ENCODE measurements at regions of chr7 and their contacts with region 1.

Region 1: DNA sequence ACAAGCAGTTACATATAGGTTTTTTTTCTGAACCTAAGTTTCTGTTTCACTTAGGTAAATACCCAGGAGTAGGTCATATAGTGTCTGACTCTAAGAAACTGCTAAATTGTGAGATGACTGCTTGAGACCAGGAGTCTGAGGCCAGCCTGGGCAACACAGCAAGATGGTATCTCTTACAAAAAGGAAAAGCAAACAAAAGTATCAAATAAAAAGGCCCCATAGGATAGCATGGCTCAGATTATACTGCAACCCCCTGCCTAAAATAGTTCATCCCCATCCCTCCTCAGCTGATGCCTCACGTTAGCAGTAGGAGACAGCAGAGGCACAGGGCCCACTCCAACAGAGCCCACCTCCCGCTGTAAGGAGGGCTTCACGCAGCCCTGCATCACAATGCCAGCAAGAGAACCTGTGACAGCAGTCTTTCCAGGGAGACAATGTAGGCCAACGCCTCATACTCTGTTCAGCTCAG is 90.2 kb downstream of the SRPK2 start:
- DNase-seq: peak; percentile 33
- ATAC-seq: peak; percentile 77
- H3K4me3 Mint-ChIP-seq: peak overlapping the region; percentile 53
- H3K27ac Mint-ChIP-seq: peak overlapping the region; percentile 76
- H3K4me1 Mint-ChIP-seq: peaks cover 55% of the 10 kb centered on the region
- H3K27me3 Mint-ChIP-seq: no peaks in the 10 kb centered on the region

Region 2: GRCh38 chr7:104679085-104679484 is 619.4 kb before region 1 on chr7:
- CTCF ChIA-PET with region 1: no interaction called
- POLR2A ChIA-PET with region 1: no interaction called
- DNase-seq: no peak
- ATAC-seq: no peak
- H3K4me3 Mint-ChIP-seq: no peak overlapping the region
- H3K27ac Mint-ChIP-seq: no peak overlapping the region
- H3K4me1 Mint-ChIP-seq: no peaks in the 10 kb centered on the region
- H3K27me3 Mint-ChIP-seq: no peaks in the 10 kb centered on the region

Region 3: GRCh38 chr7:105309235-105310169 is 11.0 kb after region 1 on chr7:
- CTCF ChIA-PET with region 1: interaction called, 23 read pairs
- POLR2A ChIA-PET with region 1: no interaction called
- DNase-seq: no peak
- ATAC-seq: peak; percentile 50
- H3K4me3 Mint-ChIP-seq: no peak overlapping the region
- H3K27ac Mint-ChIP-seq: peak overlapping the region; percentile 14
- H3K4me1 Mint-ChIP-seq: peaks cover 49% of the 10 kb centered on the region
- H3K27me3 Mint-ChIP-seq: no peaks in the 10 kb centered on the region

Measured in activated CD8-positive, alpha-beta T cell treated with anti-CD3 and anti-CD28 coated beads, Interleukin-2, amount 10 ng/mL, durations not matched to agents 7 days and 5 days (primary cell).